ENCODE measurements at regions of chr4 and their contacts with region 1.

Region 1: GRCh38 chr4:107666134-107666533 is 53.9 kb downstream of the PAPSS1 start:
- DNase-seq: no peak
- ATAC-seq: no peak
- H3K4me3 ChIP-seq: no peak overlapping the region
- H3K27ac ChIP-seq: no peak overlapping the region
- H3K4me1 ChIP-seq: peaks cover 2 to 5% of the 10 kb centered on the region in 2 donors
- H3K27me3 ChIP-seq: no peaks in the 10 kb centered on the region

Region 2: GRCh38 chr4:107044170-107044569 is 622.0 kb before region 1 on chr4:
- intact Hi-C with region 1: loop called (anchors 10 kb)
- DNase-seq: no peak
- ATAC-seq: no peak
- H3K4me3 ChIP-seq: no peak overlapping the region
- H3K27ac ChIP-seq: no peak overlapping the region
- H3K4me1 ChIP-seq: no peaks in the 10 kb centered on the region
- H3K27me3 ChIP-seq: no peaks in the 10 kb centered on the region

Region 3: GRCh38 chr4:107519053-107519452 is 147.1 kb before region 1 on chr4:
- intact Hi-C with region 1: loop called in 1 of 2 experiments (anchors 10 kb)
- DNase-seq: no peak
- ATAC-seq: no peak
- H3K4me3 ChIP-seq: no peak overlapping the region
- H3K27ac ChIP-seq: no peak overlapping the region
- H3K4me1 ChIP-seq: no peaks in the 10 kb centered on the region
- H3K27me3 ChIP-seq: no peaks in the 10 kb centered on the region

Region 4: DNA sequence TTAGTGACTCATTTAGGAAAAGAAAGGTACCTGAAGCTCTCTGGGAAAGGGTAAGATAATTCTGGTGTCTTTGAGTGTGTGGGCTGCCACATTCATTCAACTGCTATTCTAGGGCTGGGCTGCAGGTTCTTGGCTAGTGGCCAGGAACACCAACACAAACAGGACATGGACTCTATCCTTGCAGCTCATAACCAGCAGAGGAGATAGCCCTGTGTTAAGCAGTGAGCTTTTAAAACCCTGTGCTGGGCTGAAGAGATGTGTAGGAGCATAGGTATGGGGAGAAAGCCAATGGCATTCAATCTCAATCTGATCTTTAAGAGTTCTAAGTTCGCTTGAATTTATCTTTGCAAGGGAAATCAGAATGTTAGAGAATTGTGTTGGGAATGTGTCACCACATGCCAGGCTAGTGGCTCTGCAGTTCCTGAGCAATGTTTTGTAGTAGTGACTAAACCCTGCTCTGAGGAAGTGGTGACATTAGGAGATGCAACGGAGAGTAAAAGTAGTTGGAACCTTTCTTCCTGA is 197.8 kb after region 1 on chr4:
- intact Hi-C with region 1: no loop called
- DNase-seq: no peak
- ATAC-seq: peak; percentile 44
- H3K4me3 ChIP-seq: no peak overlapping the region
- H3K27ac ChIP-seq: no peak overlapping the region
- H3K4me1 ChIP-seq: no peaks in the 10 kb centered on the region
- H3K27me3 ChIP-seq: no peaks in the 10 kb centered on the region